ENCODE measurements at regions of chr4 and their contacts with region 1.

Region 1: GRCh38 chr4:165131247-165131832 is 18.7 kb upstream of the TMEM192 start:
- DNase-seq: peak; percentile 55
- CTCF ChIP-seq: peak; percentile 88

Region 2: DNA sequence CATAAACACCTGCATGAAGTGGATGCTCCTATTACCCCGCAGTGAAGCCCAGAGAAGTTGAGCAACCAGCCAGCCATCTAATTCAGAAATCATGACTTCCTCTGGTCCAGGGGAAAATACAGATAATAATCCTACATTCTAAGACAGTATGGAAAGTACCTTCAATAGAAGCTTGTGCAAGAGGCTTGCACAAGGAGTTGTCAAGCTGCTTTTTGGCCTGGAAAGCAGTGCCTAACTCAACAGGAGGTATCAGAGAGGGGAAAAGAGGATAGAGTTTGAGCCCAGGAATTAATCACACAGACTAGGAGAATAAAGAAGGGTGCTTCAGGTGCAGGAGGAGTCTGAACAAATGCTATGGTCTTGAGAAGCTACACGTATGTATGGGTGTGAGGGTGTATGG is 45.4 kb before region 1 on chr4:
- CTCF ChIA-PET with region 1: no interaction called
- POLR2A ChIA-PET with region 1: no interaction called
- DNase-seq: no peak
- CTCF ChIP-seq: no peak

Region 3: GRCh38 chr4:165118256-165118909 is 13.0 kb before region 1 on chr4:
- CTCF ChIA-PET with region 1: interaction called, 52 read pairs
- POLR2A ChIA-PET with region 1: no interaction called
- DNase-seq: peak; percentile 36
- CTCF ChIP-seq: no peak

Region 4: DNA sequence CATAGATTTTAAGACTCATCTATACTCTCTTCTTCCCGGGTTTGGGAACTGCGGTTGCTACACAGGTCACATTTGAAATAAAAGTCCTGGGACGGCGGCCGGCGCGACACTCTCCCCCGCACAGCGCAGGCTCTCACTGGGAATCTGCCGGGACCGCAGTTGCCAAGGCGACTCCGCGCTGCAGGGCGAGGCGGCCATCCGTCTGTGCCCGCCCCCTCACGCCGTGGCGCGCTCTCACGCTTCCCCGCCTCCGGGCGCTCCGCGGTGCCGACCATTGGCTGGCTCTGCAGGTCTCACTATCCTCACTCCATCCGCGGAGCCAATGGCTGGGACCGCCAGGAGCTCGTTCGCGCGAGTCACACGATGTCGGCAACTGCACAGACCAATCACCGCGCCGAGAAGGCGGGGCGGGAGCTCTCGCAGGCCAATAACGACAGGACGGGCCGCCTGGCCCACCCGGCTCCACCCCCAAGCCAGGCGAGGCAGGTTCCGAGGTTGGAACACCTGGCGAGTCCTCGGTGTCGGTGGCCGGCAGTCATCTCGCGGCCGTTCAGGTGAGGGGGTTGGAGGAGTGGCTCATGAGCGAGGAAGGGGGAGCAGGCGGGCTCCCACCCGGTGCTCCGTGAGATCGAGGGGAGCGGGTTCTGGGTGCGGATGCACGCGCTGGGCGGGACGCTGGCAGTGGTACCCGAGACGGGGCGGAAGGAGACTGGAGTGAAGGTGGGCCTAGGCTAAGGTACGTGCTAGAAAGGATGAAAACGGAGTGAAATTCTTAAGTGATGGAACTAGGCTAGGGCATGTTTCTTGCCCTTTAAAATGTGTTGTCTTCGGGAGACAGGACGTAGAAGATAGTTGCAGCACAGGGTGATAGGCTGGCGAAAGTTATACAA is 196.1 kb after region 1 on chr4 and contains the start of gene MSMO1:
- CTCF ChIA-PET with region 1: interaction called, 10 read pairs
- POLR2A ChIA-PET with region 1: no interaction called
- DNase-seq: peak; percentile 96
- CTCF ChIP-seq: no peak

Region 5: DNA sequence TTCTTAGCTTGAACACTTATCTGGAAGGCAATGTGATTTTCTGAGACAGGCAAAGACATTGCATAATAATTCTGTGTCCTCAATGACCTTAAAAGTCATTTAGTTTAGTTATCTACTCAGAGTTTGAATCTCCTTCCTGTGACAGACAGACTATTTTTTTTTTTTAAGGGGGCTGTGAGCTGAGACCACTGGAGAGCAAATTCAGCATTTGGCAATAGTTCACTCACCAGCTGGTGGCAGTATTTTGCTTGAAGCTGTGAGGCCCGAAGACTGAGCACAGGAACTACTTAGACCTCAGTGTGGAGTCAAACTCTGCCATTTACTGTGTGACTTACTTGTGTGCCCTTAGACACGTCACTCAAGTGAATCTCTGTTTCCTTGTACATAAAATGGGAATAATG is 224.6 kb after region 1 on chr4:
- CTCF ChIA-PET with region 1: interaction called, 10 read pairs
- POLR2A ChIA-PET with region 1: no interaction called
- DNase-seq: no peak
- CTCF ChIP-seq: peak; percentile 29

Region 6: DNA sequence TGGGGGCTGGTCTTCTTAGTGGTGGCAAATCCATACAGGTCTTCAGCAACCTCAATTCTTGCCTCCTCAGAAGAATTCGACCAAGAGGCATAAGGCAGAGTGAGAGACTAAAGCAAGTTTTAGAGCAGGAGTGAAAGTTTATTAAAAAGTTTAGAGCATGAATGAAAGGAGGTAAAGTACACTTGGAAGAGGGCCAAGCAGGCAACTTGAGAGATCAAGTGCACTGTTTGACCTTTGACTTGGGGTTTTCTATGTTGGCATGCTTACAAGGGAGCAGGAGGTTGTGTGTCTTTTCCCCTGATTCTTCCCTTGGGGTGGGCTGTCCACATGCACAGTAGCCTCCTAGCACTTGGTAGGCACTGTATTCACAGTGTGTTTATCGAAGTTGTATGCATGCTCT is 338.7 kb after region 1 on chr4:
- CTCF ChIA-PET with region 1: interaction called, 39 read pairs
- POLR2A ChIA-PET with region 1: no interaction called
- DNase-seq: no peak
- CTCF ChIP-seq: no peak

Measured in GM10248 (cell line).